CD8-positive, alpha-beta memory T cell (primary cell): ENCODE measurements at regions of chr1 and their contacts with region 1.

Region 1: GRCh38 chr1:84781946-84782771 is 91.9 kb upstream of the SSX2IP start:
- DNase-seq: peak; percentile 59 to 83 (median 70)
- H3K4me3 ChIP-seq: peak overlapping the region; percentile 31
- H3K4me3 Mint-ChIP-seq: peak overlapping the region; percentile 31 to 92 (median 79)
- H3K27ac ChIP-seq: no peak overlapping the region
- H3K27ac Mint-ChIP-seq: peak overlapping the region in 2 of 8 donors; percentile 20 to 58
- H3K4me1 ChIP-seq: peaks cover 22% of the 10 kb centered on the region
- H3K4me1 Mint-ChIP-seq: peaks cover 18 to 25% (median 22%) of the 10 kb centered on the region in 3 donors
- H3K27me3 ChIP-seq: no peaks in the 10 kb centered on the region
- H3K27me3 Mint-ChIP-seq: no peaks in the 10 kb centered on the region

Region 2: DNA sequence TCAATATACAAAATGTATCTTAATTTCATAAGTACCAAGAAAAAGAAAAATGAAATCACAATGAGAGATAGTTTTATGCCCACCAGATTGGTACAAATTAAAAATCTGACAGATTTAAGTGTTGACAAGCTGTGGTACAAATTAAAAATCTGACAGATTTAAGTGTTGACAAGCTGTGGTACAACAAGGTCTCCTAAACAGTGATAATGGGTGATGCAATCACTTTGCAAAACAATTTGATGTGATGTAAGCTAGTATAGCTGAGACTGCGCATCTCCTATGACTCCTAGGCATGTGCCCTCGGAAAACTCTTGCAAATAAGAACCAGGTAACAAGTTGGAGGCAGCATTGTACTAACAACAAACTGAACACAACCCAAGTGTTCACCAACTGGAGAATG is 10.3 kb after region 1 on chr1:
- CTCF ChIA-PET with region 1: interaction called, 10 read pairs
- POLR2A ChIA-PET with region 1: no interaction called
- DNase-seq: no peak
- H3K4me3 ChIP-seq: no peak overlapping the region
- H3K4me3 Mint-ChIP-seq: no peak overlapping the region
- H3K27ac ChIP-seq: no peak overlapping the region
- H3K27ac Mint-ChIP-seq: no peak overlapping the region
- H3K4me1 ChIP-seq: no peaks in the 10 kb centered on the region
- H3K4me1 Mint-ChIP-seq: no peaks in the 10 kb centered on the region
- H3K27me3 ChIP-seq: no peaks in the 10 kb centered on the region
- H3K27me3 Mint-ChIP-seq: peaks cover 12 to 14% of the 10 kb centered on the region in 2 donors

Region 3: DNA sequence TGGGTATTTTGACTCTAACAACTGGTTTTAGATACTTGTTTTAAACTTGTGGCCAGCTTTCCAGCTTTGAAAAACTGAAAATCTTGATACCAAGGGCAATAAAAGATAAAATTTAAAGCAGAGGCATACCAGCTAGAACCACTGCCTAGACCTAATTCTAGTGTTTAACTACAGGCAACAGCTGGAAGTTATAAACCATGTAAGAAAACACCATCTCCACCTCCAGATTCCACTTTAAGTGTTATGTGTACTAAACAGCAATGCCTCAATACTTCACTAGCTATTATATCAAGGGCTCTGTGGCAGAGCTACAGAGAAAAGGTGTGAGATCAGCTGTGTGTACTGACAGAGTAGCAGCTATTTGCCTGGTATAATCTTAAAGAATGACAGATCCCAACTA is 41.4 kb after region 1 on chr1:
- CTCF ChIA-PET with region 1: no interaction called
- POLR2A ChIA-PET with region 1: no interaction called
- DNase-seq: no peak
- H3K4me3 ChIP-seq: no peak overlapping the region
- H3K4me3 Mint-ChIP-seq: no peak overlapping the region
- H3K27ac ChIP-seq: no peak overlapping the region
- H3K27ac Mint-ChIP-seq: no peak overlapping the region
- H3K4me1 ChIP-seq: no peaks in the 10 kb centered on the region
- H3K4me1 Mint-ChIP-seq: peaks cover 0 to 7% (median 5%) of the 10 kb centered on the region in 3 donors
- H3K27me3 ChIP-seq: no peaks in the 10 kb centered on the region
- H3K27me3 Mint-ChIP-seq: peaks cover 3 to 5% of the 10 kb centered on the region in 2 donors

Region 4: GRCh38 chr1:84936116-84936810 is 154.1 kb after region 1 on chr1:
- CTCF ChIA-PET with region 1: interaction called, 11 read pairs
- POLR2A ChIA-PET with region 1: no interaction called
- DNase-seq: peak in 3 of 5 donors; percentile 52 to 60 (median 54)
- H3K4me3 ChIP-seq: no peak overlapping the region
- H3K4me3 Mint-ChIP-seq: no peak overlapping the region
- H3K27ac ChIP-seq: no peak overlapping the region
- H3K27ac Mint-ChIP-seq: peak overlapping the region in 1 of 8 donors; percentile 63
- H3K4me1 ChIP-seq: no peaks in the 10 kb centered on the region
- H3K4me1 Mint-ChIP-seq: peaks cover 2 to 7% (median 4%) of the 10 kb centered on the region in 3 donors
- H3K27me3 ChIP-seq: no peaks in the 10 kb centered on the region
- H3K27me3 Mint-ChIP-seq: no peaks in the 10 kb centered on the region